ENCODE measurements at regions of chr1 and their contacts with region 1.

Region 1: GRCh38 chr1:231528172-231529029 is at the start of gene TSNAX:
- DNase-seq: peak; percentile 90 to 97
- ATAC-seq: peak; percentile 90 to 94 (median 92)
- H3K4me3 ChIP-seq: peak within 1 kb of the TSS; percentile 87
- H3K4me3 Mint-ChIP-seq: peak within 1 kb of the TSS; percentile 98
- H3K27ac ChIP-seq: peak within 1 kb of the TSS; percentile 95
- H3K27ac Mint-ChIP-seq: peak within 1 kb of the TSS; percentile 96 to 99
- H3K4me1 ChIP-seq: peaks cover 38% of the 10 kb centered on the region
- H3K4me1 Mint-ChIP-seq: peaks cover 33 to 38% of the 10 kb centered on the region in 2 donors
- H3K27me3 ChIP-seq: no peaks in the 10 kb centered on the region
- H3K27me3 Mint-ChIP-seq: no peaks in the 10 kb centered on the region
- CTCF ChIP-seq: no peak
- total RNA-seq, gene TSNAX: 35.6 to 49.3 (median 44.8) TPM

Region 2: GRCh38 chr1:230978491-230979388 is 549.7 kb before region 1 on chr1 and contains the starts of genes ARV1 and TTC13:
- intact Hi-C with region 1: loop called (anchors 5 kb)
- DNase-seq: peak; percentile 92 to 96
- ATAC-seq: peak; percentile 94 to 99 (median 94)
- H3K4me3 ChIP-seq: peak within 1 kb of the TSS; percentile 57
- H3K4me3 Mint-ChIP-seq: peak within 1 kb of the TSS; percentile 99
- H3K27ac ChIP-seq: peak within 1 kb of the TSS; percentile 82
- H3K27ac Mint-ChIP-seq: peak within 1 kb of the TSS in 1 of 2 donors; percentile 97
- H3K4me1 ChIP-seq: peaks cover 40% of the 10 kb centered on the region
- H3K4me1 Mint-ChIP-seq: peaks cover 31 to 49% of the 10 kb centered on the region in 2 donors
- H3K27me3 ChIP-seq: no peaks in the 10 kb centered on the region
- H3K27me3 Mint-ChIP-seq: no peaks in the 10 kb centered on the region
- CTCF ChIP-seq: peak; percentile 35
- total RNA-seq, gene ARV1: 7.2 to 7.6 (median 7.3) TPM
- total RNA-seq, gene TTC13: 72.4 to 90.1 (median 80.4) TPM

Region 3: DNA sequence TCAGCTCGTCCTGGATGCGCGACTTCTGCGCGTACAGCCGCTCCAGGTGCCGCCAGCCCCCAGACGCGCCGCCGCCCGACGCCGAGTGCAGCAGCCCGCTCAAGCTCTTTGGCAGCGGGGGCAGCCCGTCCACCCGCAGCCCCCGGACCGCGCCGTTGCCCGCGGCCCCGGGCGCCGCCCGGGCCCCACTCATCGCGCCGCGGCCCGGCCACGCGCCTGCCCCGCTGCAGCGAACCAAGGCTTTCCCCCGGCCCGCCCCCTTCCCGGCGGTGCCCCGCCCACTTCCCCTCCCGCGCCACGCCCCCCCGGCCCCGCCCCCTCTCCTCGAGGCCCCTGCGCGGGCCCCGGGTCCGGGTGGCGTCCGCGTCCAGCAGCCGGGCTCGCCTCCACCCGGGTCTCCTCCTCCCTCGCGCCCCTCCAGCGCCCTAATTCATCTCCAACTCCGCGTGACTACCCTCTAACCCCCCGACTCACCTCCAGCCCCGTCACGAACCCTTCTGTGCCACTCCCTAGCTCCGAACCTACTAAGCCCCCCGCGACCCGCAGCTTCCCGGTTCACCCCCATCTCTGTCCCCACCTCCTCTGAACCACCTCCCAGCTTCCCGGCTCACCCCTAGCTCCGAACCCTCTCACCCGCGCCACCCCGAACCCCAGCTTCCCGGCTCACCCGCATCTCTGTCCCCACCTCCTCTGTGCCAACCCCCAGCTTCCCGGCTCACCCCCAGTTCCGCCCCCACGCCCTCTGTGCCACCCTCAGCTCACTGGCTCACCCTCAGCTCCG is 488.2 kb before region 1 on chr1 and contains the start of gene FAM89A:
- intact Hi-C with region 1: loop called (anchors 10 kb)
- DNase-seq: peak; percentile 65 to 83
- ATAC-seq: peak; percentile 85 to 89 (median 85)
- H3K4me3 ChIP-seq: peak within 1 kb of the TSS; percentile 81
- H3K4me3 Mint-ChIP-seq: peak within 1 kb of the TSS; percentile 86
- H3K27ac ChIP-seq: no peak within 1 kb of the TSS
- H3K27ac Mint-ChIP-seq: peak within 1 kb of the TSS; percentile 22 to 58
- H3K4me1 ChIP-seq: peaks cover 19% of the 10 kb centered on the region
- H3K4me1 Mint-ChIP-seq: peaks cover 18 to 27% of the 10 kb centered on the region in 2 donors
- H3K27me3 ChIP-seq: no peaks in the 10 kb centered on the region
- H3K27me3 Mint-ChIP-seq: peaks cover 4 to 8% of the 10 kb centered on the region in 2 donors
- CTCF ChIP-seq: no peak
- total RNA-seq, gene FAM89A: 1.4 to 2.5 (median 2.0) TPM

Region 4: GRCh38 chr1:231337472-231338269 is 190.7 kb before region 1 on chr1 and contains the start of gene EXOC8:
- intact Hi-C with region 1: loop called (anchors 1 kb)
- DNase-seq: peak; percentile 99 to 100
- ATAC-seq: peak; percentile 76 to 89 (median 86)
- H3K4me3 ChIP-seq: peak within 1 kb of the TSS; percentile 95
- H3K4me3 Mint-ChIP-seq: peak within 1 kb of the TSS; percentile 100
- H3K27ac ChIP-seq: peak within 1 kb of the TSS; percentile 97
- H3K27ac Mint-ChIP-seq: peak within 1 kb of the TSS; percentile 99 to 100
- H3K4me1 ChIP-seq: peaks cover 39% of the 10 kb centered on the region
- H3K4me1 Mint-ChIP-seq: peaks cover 53 to 64% of the 10 kb centered on the region in 2 donors
- H3K27me3 ChIP-seq: no peaks in the 10 kb centered on the region
- H3K27me3 Mint-ChIP-seq: no peaks in the 10 kb centered on the region
- CTCF ChIP-seq: no peak
- total RNA-seq, gene EXOC8: 29.0 to 37.1 (median 34.7) TPM

Region 5: GRCh38 chr1:231421993-231422764 is 106.2 kb before region 1 on chr1 and contains the start of gene EGLN1:
- intact Hi-C with region 1: loop called (anchors 2 kb)
- DNase-seq: peak; percentile 71 to 89
- ATAC-seq: peak; percentile 82 to 92 (median 85)
- H3K4me3 ChIP-seq: peak within 1 kb of the TSS; percentile 57
- H3K4me3 Mint-ChIP-seq: peak within 1 kb of the TSS; percentile 88
- H3K27ac ChIP-seq: peak within 1 kb of the TSS; percentile 51
- H3K27ac Mint-ChIP-seq: peak within 1 kb of the TSS; percentile 54 to 61
- H3K4me1 ChIP-seq: peaks cover 13% of the 10 kb centered on the region
- H3K4me1 Mint-ChIP-seq: peaks cover 40 to 45% of the 10 kb centered on the region in 2 donors
- H3K27me3 ChIP-seq: peaks cover 2% of the 10 kb centered on the region
- H3K27me3 Mint-ChIP-seq: peaks cover 0 to 9% of the 10 kb centered on the region in 2 donors
- CTCF ChIP-seq: no peak
- total RNA-seq, gene EGLN1: 14.2 to 27.5 (median 24.5) TPM

Region 6: GRCh38 chr1:231460614-231461013 is 67.8 kb before region 1 on chr1:
- intact Hi-C with region 1: loop called (anchors 1 kb)
- DNase-seq: peak; percentile 33 to 86
- ATAC-seq: peak; percentile 82 to 97 (median 91)
- H3K4me3 ChIP-seq: no peak overlapping the region
- H3K4me3 Mint-ChIP-seq: peak overlapping the region; percentile 62
- H3K27ac ChIP-seq: no peak overlapping the region
- H3K27ac Mint-ChIP-seq: peak overlapping the region in 1 of 2 donors; percentile 37
- H3K4me1 ChIP-seq: peaks cover 10% of the 10 kb centered on the region
- H3K4me1 Mint-ChIP-seq: peaks cover 17 to 21% of the 10 kb centered on the region in 2 donors
- H3K27me3 ChIP-seq: peaks cover 46% of the 10 kb centered on the region
- H3K27me3 Mint-ChIP-seq: peaks cover 51 to 76% of the 10 kb centered on the region in 2 donors
- CTCF ChIP-seq: no peak